AG04449 (cell line): ENCODE measurements at regions of chr6 and their contacts with region 1.

Region 1: GRCh38 chr6:43774776-43775534 is 4.9 kb downstream of the VEGFA start:
- DNase-seq: no peak
- H3K4me3 ChIP-seq: peak overlapping the region; percentile 98
- CTCF ChIP-seq: peak; percentile 89

Region 2: DNA sequence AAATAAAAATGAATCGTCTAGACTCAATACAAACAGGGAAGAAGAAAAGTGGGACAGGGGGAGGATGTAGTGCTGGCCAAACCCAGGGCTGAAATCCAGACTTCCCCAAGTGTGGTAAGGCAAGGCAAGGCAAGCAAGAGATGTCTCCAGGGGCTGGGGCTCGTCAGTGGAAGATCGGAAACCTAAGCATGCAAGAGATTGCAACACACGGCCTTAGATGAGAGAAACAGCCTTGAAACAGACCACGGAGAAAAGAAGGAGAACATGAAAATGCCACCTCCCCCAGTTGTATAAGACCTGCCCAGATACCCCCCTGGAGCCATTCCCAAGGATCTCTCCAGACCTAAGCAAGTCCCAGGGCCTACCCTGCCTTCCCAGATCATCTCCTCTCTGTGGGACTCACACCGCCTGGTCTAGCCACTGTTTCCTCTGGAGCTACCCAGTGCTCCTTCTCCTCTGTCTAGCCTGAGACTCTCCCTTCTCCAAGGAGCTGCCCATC is 15.1 kb after region 1 on chr6:
- CTCF ChIA-PET with region 1: interaction called, 10 read pairs
- POLR2A ChIA-PET with region 1: interaction called, 19 read pairs
- DNase-seq: no peak
- H3K4me3 ChIP-seq: no peak overlapping the region
- CTCF ChIP-seq: no peak

Region 3: DNA sequence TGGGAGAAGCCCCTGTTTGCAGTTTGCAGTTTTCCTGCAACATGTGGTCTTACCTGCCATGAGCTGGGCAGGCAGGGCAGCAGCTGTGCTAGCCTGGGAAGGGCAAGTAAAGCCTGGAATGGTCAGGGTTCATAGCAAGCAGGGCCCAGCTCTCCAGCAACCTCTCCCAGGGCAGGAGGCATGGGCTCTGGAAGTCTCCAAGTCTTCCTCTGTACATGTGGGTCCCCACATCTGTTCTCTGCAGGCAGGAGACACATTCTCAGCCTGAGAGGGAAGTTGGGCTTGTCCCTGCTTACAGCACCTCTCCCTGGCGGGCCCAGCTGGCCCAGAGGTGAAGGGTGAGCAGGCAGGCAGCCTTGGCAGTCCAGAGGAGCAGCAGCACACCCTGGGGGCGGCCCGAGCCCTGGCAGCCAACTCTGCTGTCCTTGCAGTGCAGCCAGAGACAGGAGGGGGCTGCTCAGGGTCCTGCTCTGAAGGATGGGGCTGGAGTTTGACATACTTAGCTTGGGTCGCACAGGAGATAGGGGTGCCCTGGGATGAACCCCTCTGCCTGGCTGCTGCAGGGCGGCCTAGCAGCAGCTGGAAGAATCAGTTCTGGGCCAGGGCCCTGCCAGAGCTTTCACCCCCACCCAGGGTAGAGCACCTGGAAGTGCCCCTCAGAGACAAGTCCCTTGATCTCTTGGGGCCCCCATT is 176.3 kb after region 1 on chr6:
- CTCF ChIA-PET with region 1: interaction called, 80 read pairs
- POLR2A ChIA-PET with region 1: interaction called, 15 read pairs
- DNase-seq: no peak
- H3K4me3 ChIP-seq: no peak overlapping the region
- CTCF ChIP-seq: peak; percentile 63

Region 4: DNA sequence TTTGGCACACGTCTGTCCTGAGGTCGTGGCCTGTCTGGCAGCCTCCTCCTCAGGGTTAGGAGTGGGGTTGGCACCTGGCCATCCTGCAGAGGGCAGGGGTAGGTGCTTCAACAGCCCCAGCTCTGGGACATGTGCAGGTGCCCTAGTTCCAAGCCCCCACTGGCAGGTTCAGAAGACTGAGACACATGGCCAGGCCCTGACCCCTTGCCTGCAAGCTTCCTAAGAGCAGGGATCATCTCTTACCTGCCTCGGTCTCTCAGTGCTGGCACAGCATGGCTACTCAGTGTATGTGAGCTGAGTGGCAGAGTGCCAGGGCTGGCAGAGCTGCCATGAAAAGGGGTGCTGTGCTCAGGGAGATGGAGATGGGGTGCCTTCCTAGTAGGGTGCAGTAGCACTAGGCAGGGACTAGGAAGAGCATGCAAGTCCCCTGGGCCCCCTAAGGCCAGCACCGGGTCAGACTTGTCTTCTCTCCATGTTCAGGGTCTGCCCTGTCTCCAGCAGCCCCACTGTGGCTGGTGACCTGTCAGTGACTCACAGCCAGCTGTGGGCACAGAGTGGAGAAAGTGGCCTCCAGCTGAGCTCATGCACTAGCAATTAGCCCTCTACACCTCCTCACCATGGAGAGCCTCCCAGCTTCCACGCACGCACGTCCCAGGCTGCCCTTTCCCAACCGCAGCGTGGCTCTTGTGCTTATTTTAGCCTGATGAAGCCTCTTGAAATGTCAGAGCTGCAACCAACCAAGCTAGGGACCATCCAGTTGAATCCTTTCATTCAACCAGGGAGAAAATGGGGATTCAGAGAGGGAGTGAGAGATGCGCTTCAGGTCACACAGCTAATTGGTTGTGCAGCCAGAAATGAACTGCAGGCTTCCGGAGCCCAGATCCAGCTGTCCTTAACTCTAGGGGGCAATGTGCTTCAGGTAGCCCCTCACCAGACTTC is 235.7 kb after region 1 on chr6:
- CTCF ChIA-PET with region 1: interaction called, 32 read pairs
- POLR2A ChIA-PET with region 1: interaction called, 25 read pairs
- DNase-seq: peak; percentile 99
- H3K4me3 ChIP-seq: no peak overlapping the region
- CTCF ChIP-seq: no peak

Region 5: GRCh38 chr6:44217332-44218143 is 442.6 kb after region 1 on chr6:
- CTCF ChIA-PET with region 1: no interaction called
- POLR2A ChIA-PET with region 1: no interaction called
- DNase-seq: no peak
- H3K4me3 ChIP-seq: no peak overlapping the region
- CTCF ChIP-seq: no peak

Region 6: DNA sequence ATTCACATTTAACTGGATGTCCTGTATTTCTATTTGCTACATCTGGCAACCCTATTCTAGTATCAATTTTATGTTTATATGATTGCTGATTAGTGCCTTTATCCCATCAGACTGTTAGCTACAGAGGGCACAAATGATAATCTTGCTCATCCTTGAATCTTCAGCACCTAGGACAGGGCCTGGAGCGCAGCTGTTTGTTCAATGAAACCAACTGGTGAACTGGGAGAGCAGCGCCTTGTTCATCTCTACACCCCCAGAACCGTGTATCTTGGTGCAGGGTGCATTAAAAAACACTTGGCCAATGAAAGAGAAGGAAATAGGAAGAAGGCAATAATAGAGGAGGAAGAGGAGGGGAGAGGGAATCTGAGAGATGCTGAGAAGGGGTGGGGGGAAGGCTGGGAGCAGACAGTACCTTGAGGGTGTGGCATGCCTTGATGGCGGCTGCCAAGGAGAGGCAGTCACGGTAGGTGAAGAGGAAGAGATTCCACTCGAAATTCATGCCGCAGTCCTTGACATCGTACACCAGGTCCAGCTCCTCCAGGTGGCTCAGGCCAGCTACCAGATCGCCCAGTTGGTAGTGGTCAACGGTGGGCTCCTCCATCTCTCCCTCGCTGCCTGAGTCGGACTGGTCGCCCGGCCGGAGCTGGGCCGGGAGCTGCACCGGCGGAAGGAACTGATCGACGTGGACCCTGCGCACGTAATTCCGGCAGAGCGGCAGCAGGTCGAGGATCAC is 510.8 kb after region 1 on chr6:
- CTCF ChIA-PET with region 1: no interaction called
- POLR2A ChIA-PET with region 1: no interaction called
- DNase-seq: no peak
- H3K4me3 ChIP-seq: no peak overlapping the region
- CTCF ChIP-seq: no peak